ENCODE measurements at regions of chrX and their contacts with region 1.

Region 1: GRCh38 chrX:150405576-150405975 is 42.5 kb downstream of the MAMLD1 start:
- DNase-seq: no peak
- ATAC-seq: no peak

Region 2: DNA sequence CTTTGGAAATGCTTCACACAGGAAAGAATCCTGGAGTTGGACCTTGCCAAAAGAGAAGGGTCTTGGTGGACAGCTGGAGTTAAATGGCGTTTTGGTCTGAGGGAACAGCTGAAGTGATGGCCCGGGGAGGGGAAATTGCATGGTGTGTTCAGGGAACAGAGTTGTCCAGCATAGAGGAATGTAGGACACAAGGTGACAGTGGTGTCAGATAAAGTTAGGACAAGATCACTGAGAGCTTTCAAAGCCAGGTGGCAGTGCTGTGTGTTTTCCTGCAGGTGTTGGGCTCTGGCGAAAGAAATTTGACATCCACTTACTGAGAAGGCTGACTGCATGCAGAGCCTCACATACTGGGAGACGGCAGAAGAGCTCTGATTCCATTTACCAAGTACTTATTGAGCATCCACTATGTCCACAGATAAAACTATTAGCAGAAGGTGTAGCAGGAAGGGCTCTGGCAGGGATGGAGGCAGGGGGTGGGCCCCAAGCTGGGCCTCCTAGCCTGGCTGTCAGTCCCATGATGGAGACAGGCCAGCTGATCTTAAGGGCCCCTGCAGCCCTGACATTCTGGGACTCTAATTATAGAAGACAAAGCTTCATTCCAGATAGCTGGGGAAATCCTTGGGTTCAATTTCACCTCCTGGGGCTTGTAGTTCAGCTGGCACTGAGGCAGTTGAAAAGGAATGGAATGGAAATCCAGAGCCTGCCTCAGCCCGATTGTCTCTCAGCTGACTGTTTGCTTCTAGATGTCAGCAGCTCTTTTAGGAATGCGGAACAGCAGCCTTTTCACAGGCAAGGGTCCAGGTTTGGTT is 192.7 kb before region 1 on chrX:
- intact Hi-C with region 1: no loop called
- DNase-seq: no peak
- ATAC-seq: peak; percentile 96

Region 3: DNA sequence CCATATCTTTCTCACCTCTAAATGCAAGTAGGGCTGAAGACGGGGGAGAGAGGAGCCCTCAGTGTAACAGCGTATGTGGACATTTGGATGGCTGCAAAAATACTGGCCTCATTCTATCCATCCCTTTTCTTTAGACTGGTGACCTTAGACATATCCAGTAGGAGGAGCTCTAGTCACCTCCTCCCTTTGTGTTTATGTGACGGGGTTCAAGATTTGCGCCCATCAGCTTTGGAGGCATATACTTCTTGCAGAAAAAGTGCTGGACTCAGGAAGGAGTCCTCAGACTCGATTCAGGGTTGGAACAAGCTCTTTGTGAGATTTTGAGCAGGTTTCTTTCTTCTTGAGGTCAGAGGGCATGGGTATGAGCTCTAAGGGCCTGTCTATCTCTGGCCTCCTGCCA is 43.7 kb after region 1 on chrX:
- intact Hi-C with region 1: loop called (anchors 5 kb)
- DNase-seq: no peak
- ATAC-seq: no peak

Region 4: DNA sequence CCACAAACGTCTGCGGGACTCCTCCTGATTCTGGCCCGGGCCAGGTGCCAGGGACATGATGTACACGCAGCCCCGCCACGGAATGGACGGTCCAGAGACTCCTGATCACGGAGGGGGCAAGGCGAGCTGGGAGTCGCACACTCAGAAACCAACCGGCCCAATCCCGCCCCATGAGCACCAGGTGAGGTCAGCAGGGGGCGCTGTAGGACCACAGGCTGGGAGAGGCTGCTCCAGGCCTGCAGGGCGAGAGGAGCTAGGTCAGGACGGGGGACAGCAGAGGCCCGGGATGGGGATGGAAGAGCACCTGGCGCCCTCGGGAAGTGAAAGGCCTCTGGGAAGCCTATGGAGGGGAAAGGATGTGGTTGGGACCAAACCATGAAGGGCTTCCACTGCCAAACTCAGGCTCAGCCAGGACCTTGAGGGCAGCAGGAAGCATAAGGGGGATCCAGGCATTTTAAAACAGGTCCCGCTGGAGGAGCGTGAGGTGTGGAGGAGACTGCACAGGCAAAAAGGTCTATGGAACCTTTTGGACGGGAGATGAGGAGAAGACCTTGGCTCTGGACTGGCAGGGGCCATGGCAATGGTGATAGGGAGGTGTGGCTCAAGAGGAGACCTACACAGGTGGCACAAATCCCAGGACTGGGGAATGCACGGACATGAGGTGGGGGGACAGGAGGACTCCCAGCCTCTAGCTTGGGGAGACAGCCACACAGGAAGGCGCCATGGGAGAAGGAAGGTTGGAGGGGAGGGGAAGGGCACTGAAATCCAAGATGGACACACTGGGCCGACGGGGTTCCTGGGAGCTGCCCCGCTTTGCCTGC is 366.8 kb after region 1 on chrX:
- intact Hi-C with region 1: no loop called
- DNase-seq: peak; percentile 88
- ATAC-seq: peak; percentile 86

Region 5: DNA sequence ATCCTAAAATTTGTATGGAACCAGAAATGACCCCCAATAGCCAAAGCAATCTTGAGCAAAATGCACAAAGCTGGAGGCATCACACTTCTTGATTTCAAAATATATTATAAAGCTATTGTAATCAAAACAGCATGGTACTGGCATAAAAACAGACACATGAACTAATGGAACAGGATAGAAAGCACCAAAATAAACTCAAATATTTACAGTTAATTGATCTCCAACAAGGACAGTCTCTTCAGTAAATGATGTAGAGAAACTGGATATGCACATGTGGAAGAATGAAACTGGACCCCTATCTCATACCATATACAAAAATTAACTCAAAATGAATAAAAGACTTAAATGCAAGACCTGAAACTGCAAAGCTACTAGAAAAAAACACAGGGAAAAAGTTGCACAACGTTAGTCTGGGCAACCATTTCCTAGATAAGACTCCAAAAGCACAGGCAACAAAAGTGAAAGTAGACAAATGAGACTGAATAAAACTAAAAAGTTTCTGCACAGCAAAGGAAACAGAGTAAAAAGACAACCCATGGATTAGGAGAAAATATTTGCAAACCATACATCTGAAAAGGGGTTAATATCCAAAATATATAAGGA is 428.0 kb after region 1 on chrX:
- intact Hi-C with region 1: no loop called
- DNase-seq: no peak
- ATAC-seq: no peak

Measured in Right ventricle myocardium inferior (tissue), 1 donor.